ENCODE measurements at regions of chr19 and their contacts with region 1.

Region 1: GRCh38 chr19:45770192-45771101 is 1.4 kb upstream of the SIX5 start:
- DNase-seq: peak; percentile 95 to 96
- H3K4me3 ChIP-seq: peak overlapping the region; percentile 44 to 83 (median 78)
- H3K27ac ChIP-seq: peak overlapping the region; percentile 78; the same call in 1 of the 2 replicates
- H3K4me1 ChIP-seq: peaks cover 0 to 21% (median 17%) of the 10 kb centered on the region in 4 experiments; a peak in 6 of 7 replicates
- H3K27me3 ChIP-seq: no peaks in the 10 kb centered on the region
- CTCF ChIP-seq: peak; percentile 65 to 82 (median 78)
- EP300 ChIP-seq: no peak; a peak in 1 of 3 replicates
- POLR2A ChIP-seq: peak; percentile 75 to 85
- RAD21 ChIP-seq: peak; percentile 56 to 81

Region 2: GRCh38 chr19:45601524-45602374 is 168.7 kb before region 1 on chr19 and contains the start of gene GPR4:
- CTCF ChIA-PET with region 1: no interaction called
- POLR2A ChIA-PET with region 1: no interaction called
- DNase-seq: peak in 1 of 2 experiments; percentile 82
- H3K4me3 ChIP-seq: peak within 1 kb of the TSS; percentile 12 to 53 (median 24)
- H3K27ac ChIP-seq: no peak within 1 kb of the TSS
- H3K4me1 ChIP-seq: peaks cover 12 to 23% (median 13%) of the 10 kb centered on the region in 4 experiments
- H3K27me3 ChIP-seq: peaks cover 36 to 56% (median 49%) of the 10 kb centered on the region in 4 experiments
- CTCF ChIP-seq: no peak
- EP300 ChIP-seq: no peak
- POLR2A ChIP-seq: no peak
- RAD21 ChIP-seq: no peak
- total RNA-seq, gene GPR4: 0.19 TPM in 1 of 2 replicates, not detected in the other

Region 3: DNA sequence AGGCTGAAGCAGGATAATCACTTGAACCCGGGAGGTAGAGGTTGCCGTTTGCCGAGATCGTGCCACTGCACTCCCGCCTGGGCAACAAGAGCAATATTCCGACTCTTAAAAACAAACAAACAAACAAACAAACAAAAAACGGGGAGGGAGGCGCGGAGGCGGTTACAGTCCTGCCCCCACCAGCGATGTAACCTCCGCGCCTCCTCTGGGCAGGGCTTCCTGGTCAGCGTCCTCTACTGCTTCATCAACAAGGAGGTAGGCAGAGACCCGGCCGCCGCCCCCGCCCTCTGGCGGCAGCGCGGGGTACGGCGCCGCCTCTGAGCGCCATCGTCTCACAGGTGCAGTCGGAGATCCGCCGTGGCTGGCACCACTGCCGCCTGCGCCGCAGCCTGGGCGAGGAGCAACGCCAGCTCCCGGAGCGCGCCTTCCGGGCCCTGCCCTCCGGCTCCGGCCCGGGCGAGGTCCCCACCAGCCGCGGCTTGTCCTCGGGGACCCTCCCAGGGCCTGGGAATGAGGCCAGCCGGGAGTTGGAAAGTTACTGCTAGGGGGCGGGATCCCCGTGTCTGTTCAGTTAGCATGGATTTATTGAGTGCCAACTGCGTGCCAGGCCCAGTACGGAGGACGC is 88.9 kb before region 1 on chr19:
- CTCF ChIA-PET with region 1: interaction called, 7 read pairs
- POLR2A ChIA-PET with region 1: interaction called, 13 read pairs
- DNase-seq: peak in 1 of 2 experiments; percentile 95
- H3K4me3 ChIP-seq: peak overlapping the region in 3 of 4 experiments; percentile 11 to 57 (median 33); a peak in 4 of 8 replicates
- H3K27ac ChIP-seq: no peak overlapping the region
- H3K4me1 ChIP-seq: peaks cover 0 to 9% (median 5%) of the 10 kb centered on the region in 4 experiments; a peak in 5 of 7 replicates
- H3K27me3 ChIP-seq: peaks cover 0 to 8% (median 0%) of the 10 kb centered on the region in 4 experiments; a peak in 4 of 7 replicates
- CTCF ChIP-seq: peak; percentile 81 to 96 (median 91)
- EP300 ChIP-seq: peak in 1 of 2 experiments; percentile 70; a peak in 1 of 3 replicates
- POLR2A ChIP-seq: no peak
- RAD21 ChIP-seq: peak; percentile 64 to 75

Region 4: GRCh38 chr19:45717166-45717982 is 53.1 kb before region 1 on chr19:
- CTCF ChIA-PET with region 1: interaction called, 6 read pairs
- POLR2A ChIA-PET with region 1: interaction called, 284 read pairs
- DNase-seq: peak; percentile 97 to 98
- H3K4me3 ChIP-seq: peak overlapping the region; percentile 83 to 92 (median 88)
- H3K27ac ChIP-seq: peak overlapping the region; percentile 96
- H3K4me1 ChIP-seq: peaks cover 0 to 9% (median 8%) of the 10 kb centered on the region in 4 experiments; a peak in 6 of 7 replicates
- H3K27me3 ChIP-seq: no peaks in the 10 kb centered on the region
- CTCF ChIP-seq: no peak
- EP300 ChIP-seq: peak in 1 of 2 experiments; percentile 56; a peak in 1 of 3 replicates
- POLR2A ChIP-seq: peak in 1 of 2 experiments; percentile 84; a peak in 2 of 3 replicates
- RAD21 ChIP-seq: no peak

Region 5: DNA sequence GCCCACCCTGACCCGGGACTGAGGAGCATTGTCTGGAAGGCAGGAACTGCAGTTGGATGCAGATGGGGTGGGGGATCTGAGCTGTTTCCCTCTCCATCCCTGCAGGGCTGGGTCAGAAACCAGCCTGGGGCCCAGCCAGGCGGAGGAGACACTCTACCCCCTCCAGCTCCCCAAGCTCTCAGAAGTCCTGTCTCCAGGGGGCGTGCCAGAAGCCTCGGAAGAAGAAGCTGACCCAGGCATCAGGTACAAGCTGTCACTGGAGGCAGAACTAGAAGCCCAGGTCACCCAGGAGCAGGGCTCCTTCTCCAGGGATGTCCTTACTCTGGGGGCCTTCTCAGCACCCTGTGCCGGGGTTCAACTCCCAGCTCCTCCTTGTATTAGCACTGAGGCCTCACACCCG is 16.9 kb before region 1 on chr19:
- CTCF ChIA-PET with region 1: interaction called, 16 read pairs
- POLR2A ChIA-PET with region 1: interaction called, 153 read pairs
- DNase-seq: peak in 1 of 2 experiments; percentile 77
- H3K4me3 ChIP-seq: no peak overlapping the region
- H3K27ac ChIP-seq: no peak overlapping the region
- H3K4me1 ChIP-seq: peaks cover 0 to 6% (median 0%) of the 10 kb centered on the region in 4 experiments; a peak in 1 of 7 replicates
- H3K27me3 ChIP-seq: no peaks in the 10 kb centered on the region
- CTCF ChIP-seq: peak; percentile 35 to 55 (median 39); a peak in 3 of 4 replicates
- EP300 ChIP-seq: no peak
- POLR2A ChIP-seq: no peak
- RAD21 ChIP-seq: peak; percentile 17 to 39; a peak in 3 of 4 replicates

Region 6: GRCh38 chr19:45798995-45799517 is 28.6 kb after region 1 on chr19:
- CTCF ChIA-PET with region 1: interaction called, 17 read pairs
- POLR2A ChIA-PET with region 1: interaction called, 27 read pairs
- DNase-seq: peak in 1 of 2 experiments; percentile 83
- H3K4me3 ChIP-seq: no peak overlapping the region
- H3K27ac ChIP-seq: no peak overlapping the region
- H3K4me1 ChIP-seq: peaks cover 0 to 4% (median 2%) of the 10 kb centered on the region in 4 experiments; a peak in 4 of 7 replicates
- H3K27me3 ChIP-seq: no peaks in the 10 kb centered on the region
- CTCF ChIP-seq: peak; percentile 66 to 84 (median 77)
- EP300 ChIP-seq: no peak
- POLR2A ChIP-seq: no peak
- RAD21 ChIP-seq: peak; percentile 45 to 52

Region 7: GRCh38 chr19:45848922-45849321 is 78.5 kb after region 1 on chr19:
- CTCF ChIA-PET with region 1: no interaction called
- POLR2A ChIA-PET with region 1: no interaction called
- DNase-seq: no peak
- H3K4me3 ChIP-seq: no peak overlapping the region
- H3K27ac ChIP-seq: no peak overlapping the region
- H3K4me1 ChIP-seq: no peaks in the 10 kb centered on the region
- H3K27me3 ChIP-seq: no peaks in the 10 kb centered on the region; a peak in 1 of 7 replicates
- CTCF ChIP-seq: peak in 2 of 3 experiments; percentile 12 to 28; a peak in 2 of 4 replicates
- EP300 ChIP-seq: no peak
- POLR2A ChIP-seq: no peak
- RAD21 ChIP-seq: 0 out of 4 replicates have a peak, but pooled peaks of 1 of the 2 experiments have one; percentile 3